Naive thymus-derived CD8-positive, alpha-beta T cell (primary cell): ENCODE measurements at regions of chr20 and their contacts with region 1.

Region 1: GRCh38 chr20:17611540-17612286 is 41.8 kb downstream of the DSTN start:
- DNase-seq: no peak
- ATAC-seq: peak in 1 of 2 donors; percentile 0
- H3K4me3 Mint-ChIP-seq: peak overlapping the region in 6 of 10 donors; percentile 70 to 88 (median 82)
- H3K27ac Mint-ChIP-seq: peak overlapping the region; percentile 95 to 100 (median 98)
- H3K4me1 Mint-ChIP-seq: peaks cover 20 to 50% (median 42%) of the 10 kb centered on the region in 4 donors
- H3K27me3 Mint-ChIP-seq: no peaks in the 10 kb centered on the region

Region 2: DNA sequence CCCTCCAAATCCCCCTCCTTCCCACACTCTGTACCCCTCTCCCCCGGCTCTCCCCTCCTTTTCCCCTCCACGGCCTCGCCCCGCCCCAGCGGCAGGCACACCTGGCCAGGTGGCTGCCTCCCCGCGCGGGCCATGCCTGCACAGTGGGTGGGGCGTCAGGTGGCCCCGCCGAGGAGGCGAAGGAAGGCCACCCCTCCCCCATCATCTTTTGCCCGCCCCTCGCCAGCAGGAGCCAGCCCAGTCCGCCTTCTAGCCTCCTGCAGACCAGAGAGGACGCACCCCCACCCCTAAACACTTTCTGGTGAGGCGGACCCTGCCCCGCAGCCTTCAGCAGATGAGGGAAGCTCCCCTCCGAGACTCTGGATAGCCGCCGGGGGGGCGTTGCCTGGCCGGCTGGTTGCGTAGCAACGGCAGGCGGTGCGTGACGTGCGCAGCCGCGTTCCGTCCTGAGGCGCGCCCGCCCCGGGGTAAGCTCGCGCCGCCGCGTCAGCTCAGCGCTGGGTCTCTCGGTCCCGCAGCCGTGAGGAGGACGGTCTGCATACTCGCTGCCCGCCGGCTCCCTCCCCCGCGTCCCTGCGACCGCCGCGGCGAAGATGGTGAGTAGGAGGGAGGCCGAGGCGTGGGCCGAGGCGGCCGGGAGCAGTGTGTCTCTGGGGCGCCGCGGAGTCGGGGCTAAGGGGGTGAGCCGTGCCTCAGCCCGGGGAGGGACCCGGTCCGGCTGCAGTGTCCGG is 41.9 kb before region 1 on chr20 and contains the start of gene DSTN:
- POLR2A ChIA-PET with region 1: interaction called, 19 read pairs
- DNase-seq: peak; percentile 82 to 93 (median 87)
- ATAC-seq: peak; percentile 88
- H3K4me3 Mint-ChIP-seq: peak within 1 kb of the TSS; percentile 91 to 98 (median 94)
- H3K27ac Mint-ChIP-seq: peak within 1 kb of the TSS; percentile 75 to 98 (median 94)
- H3K4me1 Mint-ChIP-seq: peaks cover 19 to 37% (median 33%) of the 10 kb centered on the region in 4 donors
- H3K27me3 Mint-ChIP-seq: peaks cover 0 to 9% (median 0%) of the 10 kb centered on the region in 5 donors
- polyA plus RNA-seq, gene DSTN: 75.1 to 140 (median 81.6) TPM